Natural killer cell (primary cell): ENCODE measurements at regions of chr1 and their contacts with region 1.

Region 1: DNA sequence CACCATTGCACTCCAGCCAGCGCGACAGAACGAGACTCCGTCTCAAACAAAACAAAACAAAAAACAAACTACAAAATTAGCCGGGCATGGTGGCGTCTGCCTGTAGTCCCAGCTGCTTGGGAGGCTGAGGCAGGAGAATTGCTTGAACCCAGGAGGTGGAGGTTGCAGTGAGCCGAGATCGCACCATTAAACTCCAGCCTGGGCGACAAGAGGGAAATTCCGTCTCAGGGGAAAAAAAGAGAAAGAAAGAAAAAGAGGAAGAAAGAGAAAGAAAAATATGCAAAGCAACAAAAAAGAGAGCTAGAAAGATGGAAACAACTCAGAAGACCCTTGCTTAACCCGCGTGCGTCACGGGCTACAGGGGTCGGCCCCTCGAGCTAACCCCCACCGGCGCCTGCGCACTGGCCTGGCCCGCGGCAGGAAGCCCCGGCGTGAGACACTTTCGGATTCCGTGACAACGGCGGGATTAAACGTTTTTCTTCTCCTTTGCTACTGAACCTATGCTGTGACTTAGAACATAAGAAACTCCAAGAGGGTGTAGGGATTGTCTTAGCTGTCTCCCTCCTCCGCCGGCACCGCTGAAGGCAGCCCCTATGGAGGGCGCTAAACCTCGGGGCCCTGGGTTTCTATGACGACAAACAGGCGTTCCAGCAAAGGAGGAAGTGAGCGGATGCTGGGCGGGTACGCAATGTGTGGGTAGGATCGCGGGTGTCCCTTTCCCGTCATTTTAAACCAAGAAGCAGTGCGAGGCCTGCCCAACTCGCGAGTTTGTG is at the start of gene AXDND1:
- DNase-seq: peak; percentile 88 to 95
- ATAC-seq: peak; percentile 91 to 97 (median 92)
- H3K4me3 ChIP-seq: peak within 1 kb of the TSS; percentile 79
- H3K4me3 Mint-ChIP-seq: peak within 1 kb of the TSS; percentile 92
- H3K27ac ChIP-seq: peak within 1 kb of the TSS; percentile 99
- H3K27ac Mint-ChIP-seq: peak within 1 kb of the TSS; percentile 98 to 99
- H3K4me1 ChIP-seq: peaks cover 10% of the 10 kb centered on the region
- H3K4me1 Mint-ChIP-seq: peaks cover 7 to 10% of the 10 kb centered on the region in 2 donors
- H3K27me3 ChIP-seq: no peaks in the 10 kb centered on the region
- H3K27me3 Mint-ChIP-seq: peaks cover 0 to 10% of the 10 kb centered on the region in 2 donors
- CTCF ChIP-seq: no peak
- total RNA-seq, gene AXDND1: 0.78 to 2.0 (median 1.7) TPM

Region 2: DNA sequence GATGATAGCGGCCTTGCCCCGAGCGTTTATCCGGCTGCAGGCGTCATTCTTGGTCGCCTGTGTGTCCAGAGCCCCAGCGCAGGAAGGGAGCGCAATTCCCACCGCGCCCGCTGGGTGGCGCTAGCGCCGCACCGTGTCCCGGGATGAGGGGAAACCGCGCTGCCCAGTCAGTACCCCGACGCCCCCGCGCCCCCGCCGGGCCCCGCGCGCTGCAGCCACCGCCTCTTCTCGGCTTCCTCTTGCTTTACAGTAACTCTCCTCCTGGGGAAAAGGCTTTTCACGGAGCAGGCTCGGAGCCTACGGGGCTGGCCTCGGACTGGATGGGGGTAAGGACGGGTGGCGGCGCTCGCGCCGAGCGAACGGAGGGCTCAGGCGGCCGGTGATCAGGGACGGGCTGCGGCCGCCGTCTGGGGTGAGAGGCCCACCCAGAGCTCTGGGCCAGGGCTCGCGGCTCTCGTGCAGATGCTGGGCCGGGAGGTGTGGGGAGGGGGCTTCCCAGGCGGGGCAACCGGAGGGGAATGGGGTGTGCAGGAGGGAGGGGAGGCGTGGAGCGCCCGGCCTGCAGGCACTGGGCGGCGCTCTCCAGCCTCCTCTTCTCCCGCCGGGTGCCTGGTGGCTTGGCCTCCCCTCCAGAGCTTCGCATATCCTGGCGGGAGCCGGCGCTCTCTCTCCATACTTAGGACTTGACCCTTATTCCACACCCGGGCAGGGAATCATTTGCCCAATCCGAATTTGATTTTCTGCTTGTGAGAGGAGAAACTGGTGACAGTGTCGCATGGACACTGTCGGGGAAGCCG is 822.7 kb before region 1 on chr1:
- intact Hi-C with region 1: loop called (anchors 1 kb)
- DNase-seq: peak; percentile 88 to 94
- ATAC-seq: peak; percentile 94 to 97 (median 95)
- H3K4me3 ChIP-seq: peak overlapping the region; percentile 82
- H3K4me3 Mint-ChIP-seq: peak overlapping the region; percentile 95
- H3K27ac ChIP-seq: peak overlapping the region; percentile 34
- H3K27ac Mint-ChIP-seq: peak overlapping the region in 1 of 2 donors; percentile 86
- H3K4me1 ChIP-seq: peaks cover 15% of the 10 kb centered on the region
- H3K4me1 Mint-ChIP-seq: peaks cover 0 to 22% of the 10 kb centered on the region in 2 donors
- H3K27me3 ChIP-seq: no peaks in the 10 kb centered on the region
- H3K27me3 Mint-ChIP-seq: peaks cover 0 to 3% of the 10 kb centered on the region in 2 donors
- CTCF ChIP-seq: peak; percentile 99

Region 3: DNA sequence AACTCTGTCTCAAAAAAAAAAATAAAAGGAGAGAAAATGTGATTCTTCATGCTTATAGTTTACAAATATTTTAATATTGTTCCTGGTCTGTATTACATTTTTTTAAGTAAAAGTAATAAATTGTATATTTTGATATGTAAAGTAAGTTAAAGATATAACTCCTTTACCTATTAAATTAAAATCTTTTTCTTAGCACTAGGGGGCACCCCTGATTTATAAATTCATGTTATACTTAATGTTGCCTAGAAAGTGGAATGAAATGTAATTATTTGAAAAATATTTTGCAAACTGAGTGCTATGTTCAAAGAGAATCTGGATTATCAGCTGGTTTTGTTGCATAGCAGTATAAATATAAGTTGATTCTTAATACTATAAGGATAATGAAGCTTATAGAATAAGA is 591.2 kb before region 1 on chr1:
- intact Hi-C with region 1: loop called (anchors 2 kb)
- DNase-seq: peak in 1 of 2 donors; percentile 37
- ATAC-seq: no peak
- H3K4me3 ChIP-seq: no peak overlapping the region
- H3K4me3 Mint-ChIP-seq: no peak overlapping the region
- H3K27ac ChIP-seq: no peak overlapping the region
- H3K27ac Mint-ChIP-seq: no peak overlapping the region
- H3K4me1 ChIP-seq: no peaks in the 10 kb centered on the region
- H3K4me1 Mint-ChIP-seq: peaks cover 0 to 4% of the 10 kb centered on the region in 2 donors
- H3K27me3 ChIP-seq: no peaks in the 10 kb centered on the region
- H3K27me3 Mint-ChIP-seq: no peaks in the 10 kb centered on the region
- CTCF ChIP-seq: peak; percentile 30

Region 4: GRCh38 chr1:179081687-179082332 is 283.7 kb before region 1 on chr1 and contains the start of gene TOR3A:
- intact Hi-C with region 1: loop called (anchors 1 kb)
- DNase-seq: peak; percentile 66 to 82
- ATAC-seq: peak; percentile 65 to 84 (median 84)
- H3K4me3 ChIP-seq: peak within 1 kb of the TSS; percentile 84
- H3K4me3 Mint-ChIP-seq: peak within 1 kb of the TSS; percentile 93
- H3K27ac ChIP-seq: peak within 1 kb of the TSS; percentile 86
- H3K27ac Mint-ChIP-seq: peak within 1 kb of the TSS; percentile 91 to 92
- H3K4me1 ChIP-seq: peaks cover 20% of the 10 kb centered on the region
- H3K4me1 Mint-ChIP-seq: peaks cover 12 to 24% of the 10 kb centered on the region in 2 donors
- H3K27me3 ChIP-seq: no peaks in the 10 kb centered on the region
- H3K27me3 Mint-ChIP-seq: no peaks in the 10 kb centered on the region
- CTCF ChIP-seq: no peak
- total RNA-seq, gene TOR3A: 22.7 to 33.3 (median 29.0) TPM

Region 5: DNA sequence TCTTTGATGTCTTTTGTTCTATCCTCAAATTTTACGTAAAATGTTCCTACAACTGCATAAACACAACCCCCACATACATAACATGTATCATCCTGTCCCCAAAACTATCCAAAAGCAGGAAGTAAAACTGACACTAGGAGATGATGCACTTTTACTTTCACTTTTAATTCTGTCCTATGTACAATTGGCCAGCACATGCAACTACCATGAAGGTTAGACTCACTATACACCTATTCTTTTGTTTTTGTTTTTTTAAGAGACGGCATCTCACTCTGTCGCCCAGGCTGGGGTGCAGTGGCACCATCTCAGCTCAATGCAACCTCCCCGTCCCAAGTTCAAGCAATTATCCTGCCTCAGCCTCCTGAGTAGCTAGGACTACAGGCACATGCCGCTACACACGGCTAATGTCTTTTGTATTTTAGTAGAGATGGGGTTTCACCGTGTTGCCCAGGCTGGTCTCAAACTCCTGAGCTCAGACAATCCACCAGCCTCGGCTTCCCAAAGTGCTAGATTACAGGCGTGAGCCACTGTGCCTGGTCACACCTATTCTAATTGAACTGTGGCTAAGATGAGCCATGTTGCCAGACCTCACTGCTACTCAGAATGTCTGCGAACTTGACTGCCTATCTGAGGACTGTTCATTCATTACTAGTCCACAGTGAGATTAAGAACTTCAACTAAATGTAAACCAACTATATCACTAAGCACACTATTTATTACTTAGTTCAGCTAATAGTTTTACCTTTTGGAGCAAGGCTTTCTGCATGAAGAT is 235.6 kb before region 1 on chr1:
- intact Hi-C with region 1: loop called (anchors 1 kb)
- DNase-seq: peak; percentile 19 to 78
- ATAC-seq: peak; percentile 93 to 97 (median 97)
- H3K4me3 ChIP-seq: peak overlapping the region; percentile 32
- H3K4me3 Mint-ChIP-seq: peak overlapping the region; percentile 72
- H3K27ac ChIP-seq: peak overlapping the region; percentile 77
- H3K27ac Mint-ChIP-seq: peak overlapping the region; percentile 76 to 91
- H3K4me1 ChIP-seq: peaks cover 11% of the 10 kb centered on the region
- H3K4me1 Mint-ChIP-seq: peaks cover 6 to 13% of the 10 kb centered on the region in 2 donors
- H3K27me3 ChIP-seq: no peaks in the 10 kb centered on the region
- H3K27me3 Mint-ChIP-seq: no peaks in the 10 kb centered on the region
- CTCF ChIP-seq: no peak

Region 6: DNA sequence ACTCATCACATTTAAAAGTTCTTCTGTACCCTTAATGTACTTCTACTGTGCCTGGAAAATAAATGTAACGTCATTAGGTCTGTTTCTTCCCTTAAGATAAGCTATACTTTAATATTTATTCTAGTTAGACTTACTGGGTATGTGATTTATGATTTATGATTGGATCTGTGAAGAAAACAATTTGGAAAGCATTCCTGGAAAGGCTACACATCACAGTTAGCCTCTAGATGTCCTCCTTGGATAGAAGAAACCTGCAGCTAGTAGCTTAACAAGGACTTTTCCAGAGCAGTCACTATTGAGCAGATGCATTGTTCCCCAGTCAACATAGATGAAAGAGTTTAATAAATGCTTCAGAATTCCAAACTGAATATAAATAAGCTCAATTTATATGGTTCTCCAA is 113.8 kb before region 1 on chr1:
- intact Hi-C with region 1: loop called (anchors 1 kb)
- DNase-seq: peak in 1 of 2 donors; percentile 48
- ATAC-seq: no peak
- H3K4me3 ChIP-seq: no peak overlapping the region
- H3K4me3 Mint-ChIP-seq: no peak overlapping the region
- H3K27ac ChIP-seq: no peak overlapping the region
- H3K27ac Mint-ChIP-seq: no peak overlapping the region
- H3K4me1 ChIP-seq: no peaks in the 10 kb centered on the region
- H3K4me1 Mint-ChIP-seq: no peaks in the 10 kb centered on the region
- H3K27me3 ChIP-seq: no peaks in the 10 kb centered on the region
- H3K27me3 Mint-ChIP-seq: no peaks in the 10 kb centered on the region
- CTCF ChIP-seq: no peak